Activated B cell treated with CpG ODN at 0.5 μM for 24 hours (primary cell): ENCODE measurements at regions of chr2 and their contacts with region 1.

Region 1: DNA sequence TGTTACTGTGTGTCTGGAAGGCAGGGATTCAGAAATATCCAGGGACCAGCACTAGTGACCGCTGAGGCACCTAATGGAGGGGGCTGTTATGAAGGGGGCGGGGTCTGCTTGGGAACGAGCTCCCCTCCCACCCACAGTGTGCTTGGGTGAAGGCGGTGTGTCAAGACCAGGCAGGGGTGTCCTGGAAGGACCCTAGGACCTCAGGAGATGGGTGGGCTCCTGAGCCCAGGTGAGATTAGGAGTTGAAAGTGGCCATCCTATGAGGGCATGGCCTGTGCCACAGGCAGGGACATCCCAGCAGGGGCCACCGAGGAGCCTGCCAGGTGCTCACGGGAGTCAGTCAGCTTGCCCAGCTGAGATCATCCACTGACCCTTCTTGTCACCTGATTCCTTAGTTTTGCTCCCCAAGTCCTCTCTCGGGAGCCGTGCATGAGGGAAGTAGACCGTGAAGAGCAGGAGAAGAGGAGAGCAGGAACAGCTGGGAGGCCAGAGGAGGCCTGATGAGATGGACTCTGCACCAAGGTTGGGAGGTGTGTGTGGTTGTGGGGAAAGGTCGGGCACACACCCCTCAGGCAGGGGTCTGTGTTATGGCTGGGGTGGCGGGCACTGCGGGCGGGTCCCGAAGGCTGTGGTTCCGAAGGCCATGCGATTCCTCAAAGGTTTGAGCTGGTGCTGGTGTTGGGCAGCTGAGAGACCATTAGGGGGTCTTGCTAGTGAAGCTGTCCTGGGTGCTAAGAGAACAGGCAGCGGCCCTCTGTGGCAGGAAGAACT is 180.9 kb upstream of the HS6ST1 start:
- DNase-seq: no peak
- ATAC-seq: no peak
- H3K4me3 Mint-ChIP-seq: no peak overlapping the region
- H3K27ac Mint-ChIP-seq: no peak overlapping the region
- H3K4me1 Mint-ChIP-seq: peaks cover 19% of the 10 kb centered on the region
- H3K27me3 Mint-ChIP-seq: no peaks in the 10 kb centered on the region
- CTCF ChIP-seq: no peak

Region 2: DNA sequence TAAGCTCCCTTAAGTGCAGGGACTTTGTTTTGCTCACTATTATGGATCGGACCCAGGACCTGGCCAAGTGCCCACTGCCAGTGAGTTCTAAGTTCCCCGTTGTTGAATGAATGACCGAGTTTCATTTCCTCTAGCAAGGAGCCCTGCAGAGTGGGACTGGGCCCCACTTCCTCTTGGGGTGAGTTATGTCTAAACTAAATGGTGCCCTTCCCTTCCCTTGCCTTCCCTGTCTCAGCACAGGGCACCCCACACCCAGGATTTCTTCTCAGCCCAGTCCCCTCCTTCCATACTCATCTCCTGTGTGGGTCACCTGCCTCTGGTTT is 14.4 kb after region 1 on chr2:
- CTCF ChIA-PET with region 1: no interaction called
- POLR2A ChIA-PET with region 1: no interaction called
- intact Hi-C with region 1: no loop called
- DNase-seq: no peak
- ATAC-seq: peak; percentile 74
- H3K4me3 Mint-ChIP-seq: peak overlapping the region; percentile 48
- H3K27ac Mint-ChIP-seq: peak overlapping the region; percentile 43
- H3K4me1 Mint-ChIP-seq: peaks cover 20% of the 10 kb centered on the region
- H3K27me3 Mint-ChIP-seq: no peaks in the 10 kb centered on the region
- CTCF ChIP-seq: no peak

Region 3: GRCh38 chr2:128686497-128686859 is 186.9 kb after region 1 on chr2:
- CTCF ChIA-PET with region 1: no interaction called
- POLR2A ChIA-PET with region 1: interaction called, 15 read pairs
- intact Hi-C with region 1: no loop called
- DNase-seq: no peak
- ATAC-seq: no peak
- H3K4me3 Mint-ChIP-seq: no peak overlapping the region
- H3K27ac Mint-ChIP-seq: no peak overlapping the region
- H3K4me1 Mint-ChIP-seq: peaks cover 23% of the 10 kb centered on the region
- H3K27me3 Mint-ChIP-seq: no peaks in the 10 kb centered on the region
- CTCF ChIP-seq: no peak